Activated CD4-positive, alpha-beta T cell treated with anti-CD3 and anti-CD28 coated beads, Interleukin-2, amount 10 ng/mL, durations not matched to agents 24 days and 14 days (primary cell): ENCODE measurements at regions of chr11 and their contacts with region 1.

Region 1: GRCh38 chr11:126318574-126319373 is 14.9 kb downstream of the DCPS start:
- DNase-seq: peak; percentile 80
- H3K4me3 Mint-ChIP-seq: peak overlapping the region; percentile 56
- H3K27ac Mint-ChIP-seq: peak overlapping the region; percentile 80
- H3K4me1 Mint-ChIP-seq: peaks cover 37% of the 10 kb centered on the region
- H3K27me3 Mint-ChIP-seq: no peaks in the 10 kb centered on the region

Region 2: DNA sequence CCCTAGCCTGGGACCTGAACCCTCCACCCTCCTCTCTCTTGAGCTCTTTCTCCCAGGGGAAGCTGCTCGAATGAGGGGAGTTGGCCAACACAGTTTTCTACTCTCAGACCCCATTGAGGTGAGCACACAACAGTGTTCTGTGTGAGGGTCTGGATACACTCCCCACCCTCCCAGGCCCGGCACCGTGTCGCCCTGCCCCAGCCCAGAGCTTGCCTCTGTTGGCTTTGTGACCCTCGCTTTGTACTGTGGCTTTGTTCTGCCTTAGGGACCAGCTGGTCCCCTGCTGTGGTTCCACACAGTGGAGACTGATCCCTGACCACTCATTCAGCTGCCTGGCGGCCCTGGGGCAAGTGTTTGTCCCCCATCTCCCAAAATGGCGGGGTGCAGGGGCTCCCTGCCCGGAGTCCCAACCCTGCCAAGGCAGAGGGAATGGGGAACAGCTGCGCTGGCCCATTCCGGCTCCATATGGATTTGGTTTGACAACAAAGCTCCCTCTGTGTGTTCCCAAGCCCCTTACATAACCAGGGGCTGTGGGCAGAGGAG is 45.0 kb after region 1 on chr11:
- intact Hi-C with region 1: no loop called
- DNase-seq: no peak
- H3K4me3 Mint-ChIP-seq: no peak overlapping the region
- H3K27ac Mint-ChIP-seq: no peak overlapping the region
- H3K4me1 Mint-ChIP-seq: peaks cover 3% of the 10 kb centered on the region
- H3K27me3 Mint-ChIP-seq: no peaks in the 10 kb centered on the region

Region 3: GRCh38 chr11:126416542-126417090 is 97.8 kb after region 1 on chr11:
- intact Hi-C with region 1: loop called (anchors 5 kb)
- DNase-seq: peak; percentile 90
- H3K4me3 Mint-ChIP-seq: peak overlapping the region; percentile 70
- H3K27ac Mint-ChIP-seq: peak overlapping the region; percentile 64
- H3K4me1 Mint-ChIP-seq: peaks cover 17% of the 10 kb centered on the region
- H3K27me3 Mint-ChIP-seq: peaks cover 10% of the 10 kb centered on the region